Activated T-helper 2 cell treated with anti-CD3 and anti-CD28 coated beads, Interferon-gamma antibody, Interleukin-2, Interleukin-4, amounts not matched to agents 10 μg/mL and 5 μg/mL and 100 μg/mL, durations not matched to agents 14 hours and 24 hours and 36 hours (primary cell): ENCODE measurements at regions of chr1 and their contacts with region 1.

Region 1: DNA sequence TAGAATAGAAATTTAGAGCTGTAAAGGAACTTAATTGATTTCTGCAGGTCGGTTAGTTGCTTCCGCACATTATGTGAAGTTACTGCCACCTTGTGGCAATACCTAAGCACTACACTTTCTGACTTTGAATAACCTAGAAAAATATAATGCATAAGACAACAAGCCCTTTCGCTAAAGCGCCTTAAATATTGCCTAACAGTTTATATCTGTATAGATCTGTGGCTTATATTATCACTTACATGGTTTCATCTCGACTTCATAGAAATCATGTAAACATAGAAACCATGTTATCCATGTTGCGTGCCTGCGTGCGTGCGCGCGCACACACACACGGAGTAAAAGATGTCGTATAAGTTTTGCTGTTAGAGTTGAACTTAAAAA is 10.9 kb upstream of the IFI16 start:
- DNase-seq: peak; percentile 33
- H3K4me3 Mint-ChIP-seq: peak overlapping the region; percentile 43
- H3K27ac Mint-ChIP-seq: no peak overlapping the region
- H3K4me1 Mint-ChIP-seq: peaks cover 31% of the 10 kb centered on the region
- H3K27me3 Mint-ChIP-seq: no peaks in the 10 kb centered on the region

Region 2: GRCh38 chr1:158506369-158506987 is 492.3 kb before region 1 on chr1:
- intact Hi-C with region 1: loop called (anchors 1 kb)
- DNase-seq: peak; percentile 17
- H3K4me3 Mint-ChIP-seq: no peak overlapping the region
- H3K27ac Mint-ChIP-seq: no peak overlapping the region
- H3K4me1 Mint-ChIP-seq: no peaks in the 10 kb centered on the region
- H3K27me3 Mint-ChIP-seq: peaks cover 35% of the 10 kb centered on the region

Region 3: DNA sequence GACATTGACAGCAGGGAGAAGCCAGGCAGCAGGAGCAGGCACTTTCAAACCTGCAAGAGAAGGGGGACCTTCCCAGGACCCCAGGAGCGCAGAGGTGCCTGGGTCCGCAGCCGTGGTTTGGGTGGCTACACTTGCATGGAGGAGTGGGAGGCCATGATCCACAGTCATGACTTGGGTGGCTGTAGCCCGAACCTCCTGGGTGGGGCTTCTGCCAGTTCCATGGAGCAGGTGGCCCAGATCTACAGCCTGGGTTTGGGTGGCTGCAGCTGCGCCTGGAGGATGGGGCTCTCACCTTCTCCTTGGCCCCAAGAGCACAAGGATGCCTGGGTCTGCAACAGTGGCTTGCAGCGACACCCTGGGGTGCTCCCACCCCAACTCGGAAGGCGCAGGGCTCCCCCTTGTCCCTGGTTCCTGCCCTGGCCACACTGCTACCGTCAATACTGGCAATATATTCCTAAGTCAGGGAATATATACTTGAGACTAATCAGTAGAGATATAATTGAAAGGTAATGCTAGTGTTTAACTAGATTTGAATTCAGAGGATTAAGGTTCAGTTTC is 246.5 kb before region 1 on chr1:
- intact Hi-C with region 1: loop called (anchors 5 kb)
- DNase-seq: no peak
- H3K4me3 Mint-ChIP-seq: no peak overlapping the region
- H3K27ac Mint-ChIP-seq: no peak overlapping the region
- H3K4me1 Mint-ChIP-seq: no peaks in the 10 kb centered on the region
- H3K27me3 Mint-ChIP-seq: peaks cover 15% of the 10 kb centered on the region

Region 4: DNA sequence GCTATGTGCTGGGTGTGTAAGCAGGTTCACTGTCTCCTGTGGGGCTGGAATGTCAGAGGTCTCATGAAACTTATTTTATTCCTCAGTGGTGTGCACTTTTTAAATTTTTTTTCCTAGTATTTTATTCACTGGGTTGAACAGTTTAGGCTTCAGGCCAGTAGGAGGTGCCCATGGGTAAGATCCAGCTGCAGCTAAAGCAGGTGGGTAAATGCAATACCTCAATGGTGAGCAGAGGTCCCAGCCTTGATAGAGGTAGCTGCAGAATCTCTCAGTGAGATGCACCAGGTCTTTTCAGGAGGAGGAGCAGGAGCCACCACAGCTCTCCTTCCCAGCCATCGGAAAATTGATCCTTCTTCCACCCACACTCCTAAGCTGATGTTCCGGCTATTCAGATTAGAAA is 205.2 kb before region 1 on chr1:
- intact Hi-C with region 1: loop called (anchors 2 kb)
- DNase-seq: peak; percentile 18
- H3K4me3 Mint-ChIP-seq: no peak overlapping the region
- H3K27ac Mint-ChIP-seq: no peak overlapping the region
- H3K4me1 Mint-ChIP-seq: no peaks in the 10 kb centered on the region
- H3K27me3 Mint-ChIP-seq: peaks cover 25% of the 10 kb centered on the region